Activated CD4-positive, alpha-beta memory T cell treated with anti-CD3 and anti-CD28 coated beads for 36 hours (primary cell): ENCODE measurements at regions of chr6 and their contacts with region 1.

Region 1: DNA sequence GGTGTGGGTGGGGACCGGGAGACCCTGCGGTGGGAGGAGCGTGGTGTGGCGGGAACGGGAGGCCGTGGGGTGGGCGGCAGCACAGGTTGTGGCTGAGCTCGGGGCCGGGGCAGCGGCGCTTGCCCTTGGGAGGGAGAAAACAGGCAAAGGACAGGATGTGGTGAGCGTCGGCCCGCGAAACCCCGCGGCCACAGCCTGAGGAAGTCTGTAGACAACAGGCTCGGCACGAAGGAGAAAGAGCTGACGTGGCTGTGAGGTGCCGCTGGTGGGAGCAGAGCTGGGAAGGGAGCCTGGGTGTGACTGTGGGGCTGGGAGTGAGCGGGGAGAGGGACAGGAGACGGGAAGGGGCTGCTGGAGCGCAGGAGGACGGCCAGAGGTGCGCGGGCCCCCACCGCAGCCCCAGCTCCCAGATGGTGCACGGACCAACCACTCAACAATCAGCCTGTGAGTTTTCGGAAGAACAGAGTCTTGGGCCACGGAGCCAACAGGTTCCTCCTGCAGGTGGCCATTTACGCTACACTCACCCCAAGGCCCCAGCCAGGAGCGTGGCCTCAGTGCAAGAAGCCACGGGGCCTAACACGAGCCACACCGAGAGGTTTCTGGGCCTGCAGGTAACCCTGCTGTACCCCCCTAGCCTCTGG is 202.8 kb downstream of the DLL1 start:
- DNase-seq: peak; percentile 75
- H3K4me3 Mint-ChIP-seq: peak overlapping the region; percentile 68
- H3K27ac Mint-ChIP-seq: peak overlapping the region; percentile 85
- H3K4me1 Mint-ChIP-seq: peaks cover 31% of the 10 kb centered on the region
- H3K27me3 Mint-ChIP-seq: no peaks in the 10 kb centered on the region

Region 2: DNA sequence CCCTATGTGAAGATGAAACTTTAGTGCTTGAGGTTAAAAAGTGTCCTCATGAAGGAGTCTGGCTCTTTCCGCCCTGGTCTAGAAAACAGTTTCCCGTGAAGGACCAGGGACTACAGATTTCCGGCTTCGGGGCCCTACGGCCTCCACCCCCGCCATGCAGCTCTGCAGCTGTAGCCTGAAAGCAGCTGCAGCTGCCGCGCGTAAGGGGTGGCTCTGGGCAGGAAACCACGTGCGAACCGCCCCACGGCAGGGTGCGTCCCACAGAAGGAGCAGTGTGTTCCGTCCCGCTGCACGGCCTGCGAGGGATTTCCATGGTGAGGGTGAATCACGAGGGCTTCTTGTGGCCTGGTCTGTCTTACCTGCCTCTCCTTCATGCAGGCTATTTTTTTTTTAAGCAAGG is 219.6 kb before region 1 on chr6:
- CTCF ChIA-PET with region 1: no interaction called
- POLR2A ChIA-PET with region 1: no interaction called
- intact Hi-C with region 1: loop called (anchors 2 kb)
- DNase-seq: peak; percentile 79
- H3K4me3 Mint-ChIP-seq: no peak overlapping the region
- H3K27ac Mint-ChIP-seq: no peak overlapping the region
- H3K4me1 Mint-ChIP-seq: peaks cover 10% of the 10 kb centered on the region
- H3K27me3 Mint-ChIP-seq: no peaks in the 10 kb centered on the region

Region 3: DNA sequence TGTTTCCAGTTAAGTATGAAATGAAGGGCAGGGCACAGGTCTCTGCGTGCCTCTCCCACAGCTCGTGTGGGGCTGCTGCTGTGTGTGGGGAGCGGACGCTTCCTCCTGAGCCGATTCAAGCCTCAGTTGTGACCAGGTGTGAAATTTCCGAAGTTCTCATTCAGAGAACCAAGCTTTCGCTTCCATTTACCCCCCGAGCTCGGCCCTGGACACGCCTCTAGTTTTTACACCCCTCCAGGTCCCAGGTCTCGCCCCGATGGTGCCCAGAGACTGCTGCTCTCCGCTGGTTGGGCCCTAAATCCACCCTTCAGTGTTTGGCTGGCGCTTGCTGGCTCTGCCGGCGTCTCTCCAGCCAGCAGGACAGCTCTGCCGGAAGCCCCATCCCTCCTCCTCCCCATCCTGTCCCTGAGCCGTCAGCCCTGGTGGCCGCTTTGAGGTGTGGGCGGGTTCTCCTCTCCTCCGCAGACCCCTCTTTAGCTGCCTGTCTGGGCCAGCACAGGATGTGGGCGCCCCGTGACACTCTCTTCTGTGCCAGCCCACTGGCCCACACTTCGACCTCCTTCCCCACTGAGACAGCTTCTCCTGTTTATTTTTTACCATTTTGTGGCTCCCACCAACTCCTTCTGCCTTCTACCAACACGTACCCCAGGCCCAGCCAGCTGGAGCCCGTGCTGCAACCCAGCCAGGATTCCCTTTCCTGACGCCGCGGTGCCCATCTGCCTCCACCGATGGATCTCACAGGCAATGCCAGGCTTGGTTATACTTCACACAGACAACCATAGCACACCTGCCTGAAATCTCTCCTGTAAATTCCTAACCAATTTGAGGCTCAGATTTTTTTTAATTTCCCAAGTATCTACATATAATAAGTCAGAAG is 60.0 kb after region 1 on chr6:
- CTCF ChIA-PET with region 1: interaction called, 6 read pairs
- POLR2A ChIA-PET with region 1: interaction called, 3 read pairs
- intact Hi-C with region 1: loop called (anchors 1 kb)
- DNase-seq: peak; percentile 71
- H3K4me3 Mint-ChIP-seq: peak overlapping the region; percentile 62
- H3K27ac Mint-ChIP-seq: peak overlapping the region; percentile 85
- H3K4me1 Mint-ChIP-seq: peaks cover 40% of the 10 kb centered on the region
- H3K27me3 Mint-ChIP-seq: peaks cover 14% of the 10 kb centered on the region